ENCODE measurements at regions of chr4 and their contacts with region 1.

Region 1: DNA sequence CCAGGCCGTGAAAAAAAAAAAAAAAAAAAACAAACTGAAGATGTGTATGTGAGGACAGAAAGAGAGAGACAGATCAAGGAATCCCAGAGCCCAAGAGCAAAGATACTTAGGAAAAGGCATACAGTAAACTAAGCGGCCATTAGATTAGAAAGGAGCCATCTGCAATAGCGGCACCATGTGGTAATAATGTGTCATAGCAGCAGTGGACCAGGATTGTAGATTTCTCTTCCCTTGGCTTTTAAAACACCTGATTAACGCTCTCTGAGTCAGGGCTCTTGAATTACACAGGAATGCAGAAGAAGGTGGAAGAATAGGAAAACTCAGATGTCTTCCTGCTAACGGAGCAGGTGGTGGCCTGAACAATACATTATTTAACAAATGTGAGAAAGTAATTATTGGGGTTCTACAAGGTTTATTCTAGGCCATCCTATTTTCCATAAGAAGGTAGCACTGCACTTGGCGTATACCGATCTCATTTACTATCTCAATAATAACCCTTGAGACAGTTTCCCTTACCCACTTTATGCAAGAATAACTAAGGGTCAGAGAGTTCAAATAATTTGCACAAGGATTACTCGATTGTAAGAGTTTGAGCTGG is 182.7 kb downstream of the KCNIP4 start:
- DNase-seq: peak; percentile 21 to 51 (median 32)
- ATAC-seq: peak; percentile 55; the same call in 1 of the 3 replicates
- H3K4me3 ChIP-seq: no peak overlapping the region
- H3K27ac ChIP-seq: no peak overlapping the region
- H3K4me1 ChIP-seq: no peaks in the 10 kb centered on the region
- H3K27me3 ChIP-seq: no peaks in the 10 kb centered on the region
- CTCF ChIP-seq: peak in 2 of 3 experiments; percentile 65 to 73; a peak in 4 of 6 replicates
- EP300 ChIP-seq: no peak
- POLR2A ChIP-seq: no peak
- RAD21 ChIP-seq: peak; percentile 30 to 62; a peak in 3 of 4 replicates

Region 2: DNA sequence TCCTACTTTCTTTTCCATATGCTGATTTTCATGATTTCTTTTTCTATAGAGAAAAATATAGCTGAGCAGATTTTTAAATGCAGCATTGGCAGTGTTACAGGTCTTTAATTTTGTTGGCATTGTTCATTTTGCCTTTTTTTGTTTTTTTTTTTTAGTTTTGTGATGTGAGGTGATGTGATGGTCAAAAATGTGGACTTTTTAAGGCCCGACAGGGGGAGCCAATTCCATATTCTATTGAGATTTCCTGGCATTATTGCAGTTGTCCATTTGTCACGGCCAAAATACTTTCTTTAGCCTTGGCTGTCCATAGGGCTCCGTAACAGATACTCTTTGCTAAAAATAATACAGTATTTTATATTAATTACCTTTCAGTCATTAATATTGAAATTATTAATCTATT is 1466.4 kb before region 1 on chr4:
- CTCF ChIA-PET with region 1: no interaction called
- POLR2A ChIA-PET with region 1: no interaction called
- in situ Hi-C with region 1: no loop called
- intact Hi-C with region 1: loop called (anchors 10 kb)
- DNase-seq: peak in 2 of 4 experiments; percentile 8 to 13
- ATAC-seq: no peak
- H3K4me3 ChIP-seq: no peak overlapping the region
- H3K27ac ChIP-seq: no peak overlapping the region
- H3K4me1 ChIP-seq: no peaks in the 10 kb centered on the region
- H3K27me3 ChIP-seq: no peaks in the 10 kb centered on the region
- CTCF ChIP-seq: peak in 1 of 3 experiments; percentile 24; a peak in 1 of 6 replicates
- EP300 ChIP-seq: no peak
- POLR2A ChIP-seq: no peak
- RAD21 ChIP-seq: no peak

Region 3: DNA sequence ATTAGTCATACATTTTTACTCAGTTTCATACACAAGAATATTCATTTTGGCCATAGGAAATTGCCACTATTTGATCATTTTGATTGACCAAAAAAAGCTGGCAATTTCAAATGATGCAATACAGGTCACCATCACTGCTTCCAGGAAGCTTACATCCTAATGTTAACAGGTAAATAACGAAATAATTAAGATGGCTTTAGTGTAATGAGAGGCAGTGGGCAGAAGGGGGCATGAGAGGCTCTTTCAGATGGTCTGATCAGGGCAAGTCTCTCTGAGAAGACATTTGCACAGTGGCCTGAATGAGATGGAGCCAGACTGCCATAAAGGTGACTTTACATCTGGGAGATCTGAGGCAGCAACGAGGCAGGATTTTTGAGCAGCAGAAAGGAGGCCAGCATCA is 1343.5 kb before region 1 on chr4:
- CTCF ChIA-PET with region 1: no interaction called
- POLR2A ChIA-PET with region 1: no interaction called
- in situ Hi-C with region 1: loop called (anchors 25 kb)
- intact Hi-C with region 1: no loop called
- DNase-seq: peak; percentile 18 to 63 (median 37)
- ATAC-seq: peak; percentile 90
- H3K4me3 ChIP-seq: no peak overlapping the region
- H3K27ac ChIP-seq: no peak overlapping the region
- H3K4me1 ChIP-seq: no peaks in the 10 kb centered on the region
- H3K27me3 ChIP-seq: no peaks in the 10 kb centered on the region
- CTCF ChIP-seq: peak; percentile 48 to 52 (median 48)
- EP300 ChIP-seq: no peak
- POLR2A ChIP-seq: no peak
- RAD21 ChIP-seq: peak; percentile 31 to 52

Region 4: DNA sequence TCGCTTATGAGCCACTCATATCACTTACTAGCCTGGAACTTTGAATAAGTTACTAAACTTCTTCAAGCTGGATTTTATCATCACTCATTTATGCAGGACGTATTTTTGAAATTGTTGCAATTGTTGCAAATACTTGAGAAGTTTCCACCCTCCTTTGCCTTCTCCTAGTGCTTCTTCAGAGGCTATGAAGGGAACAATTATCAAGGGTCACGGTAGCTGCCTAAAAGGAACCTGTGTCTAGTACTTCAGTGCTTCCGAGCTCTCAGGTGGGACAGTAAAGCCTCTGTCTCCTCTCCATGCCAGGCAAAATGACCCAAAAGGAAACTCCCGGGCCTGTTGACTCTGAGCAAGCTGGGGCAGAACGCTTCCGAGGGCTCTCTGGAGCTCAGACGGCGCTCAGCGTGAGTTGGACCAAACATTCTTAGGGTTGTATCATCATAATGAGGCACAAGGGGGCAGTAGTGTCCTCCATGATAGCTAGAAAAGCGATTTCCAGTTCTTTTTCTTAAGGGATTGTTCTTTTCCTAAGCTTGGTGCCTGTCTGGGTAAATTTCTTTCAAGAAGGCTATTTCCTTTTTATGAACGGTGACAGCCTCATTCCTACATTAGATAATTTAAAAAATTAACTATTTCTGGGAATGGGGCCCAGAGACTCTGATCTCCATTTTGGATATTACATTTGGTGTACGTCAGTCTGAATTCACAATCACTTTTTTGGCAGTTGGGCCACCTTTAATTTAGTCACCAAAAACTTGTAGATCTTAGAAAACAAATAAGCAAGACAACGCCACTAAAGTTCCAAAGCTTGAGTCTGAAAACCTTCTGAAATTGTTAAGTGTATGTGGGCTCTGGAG is 992.5 kb before region 1 on chr4:
- CTCF ChIA-PET with region 1: interaction called, 3 read pairs
- POLR2A ChIA-PET with region 1: no interaction called
- in situ Hi-C with region 1: loop called (anchors 5 kb)
- intact Hi-C with region 1: loop called (anchors 1 kb)
- DNase-seq: peak; percentile 49 to 60 (median 50)
- ATAC-seq: peak; percentile 96
- H3K4me3 ChIP-seq: no peak overlapping the region
- H3K27ac ChIP-seq: no peak overlapping the region
- H3K4me1 ChIP-seq: no peaks in the 10 kb centered on the region
- H3K27me3 ChIP-seq: no peaks in the 10 kb centered on the region
- CTCF ChIP-seq: peak; percentile 56 to 71 (median 70)
- EP300 ChIP-seq: no peak
- POLR2A ChIP-seq: no peak
- RAD21 ChIP-seq: peak; percentile 30 to 57

Region 5: DNA sequence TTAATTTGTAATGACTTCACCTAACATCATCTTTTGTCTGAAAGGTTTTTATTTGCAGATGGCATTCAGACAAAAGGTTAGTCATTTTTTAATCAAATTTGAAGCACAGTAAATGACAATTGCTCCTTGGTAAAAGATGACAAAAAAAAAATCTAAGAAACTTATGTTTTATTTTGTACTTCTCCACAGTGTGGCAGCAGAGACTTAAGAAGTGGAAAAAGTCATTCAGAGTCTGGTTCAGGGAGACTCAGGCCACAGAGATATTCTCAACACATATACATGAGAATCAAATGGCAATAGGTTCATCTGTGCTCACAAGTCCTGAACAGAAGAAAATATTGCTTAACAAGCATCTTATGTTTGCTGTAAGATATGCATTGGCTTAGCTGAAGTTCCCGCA is 253.6 kb before region 1 on chr4:
- CTCF ChIA-PET with region 1: no interaction called
- POLR2A ChIA-PET with region 1: no interaction called
- in situ Hi-C with region 1: no loop called
- intact Hi-C with region 1: loop called (anchors 2 kb)
- DNase-seq: peak in 1 of 4 experiments; percentile 1
- ATAC-seq: no peak
- H3K4me3 ChIP-seq: no peak overlapping the region
- H3K27ac ChIP-seq: no peak overlapping the region
- H3K4me1 ChIP-seq: no peaks in the 10 kb centered on the region
- H3K27me3 ChIP-seq: no peaks in the 10 kb centered on the region
- CTCF ChIP-seq: peak in 1 of 3 experiments; percentile 13; a peak in 1 of 6 replicates
- EP300 ChIP-seq: no peak
- POLR2A ChIP-seq: no peak
- RAD21 ChIP-seq: peak in 1 of 2 experiments; percentile 22; a peak in 2 of 4 replicates

Region 6: GRCh38 chr4:21529214-21529613 is 236.7 kb before region 1 on chr4:
- CTCF ChIA-PET with region 1: no interaction called
- POLR2A ChIA-PET with region 1: no interaction called
- in situ Hi-C with region 1: no loop called
- intact Hi-C with region 1: no loop called
- DNase-seq: no peak
- ATAC-seq: no peak
- H3K4me3 ChIP-seq: no peak overlapping the region
- H3K27ac ChIP-seq: no peak overlapping the region
- H3K4me1 ChIP-seq: no peaks in the 10 kb centered on the region
- H3K27me3 ChIP-seq: no peaks in the 10 kb centered on the region
- CTCF ChIP-seq: no peak
- EP300 ChIP-seq: no peak
- POLR2A ChIP-seq: no peak
- RAD21 ChIP-seq: no peak

Region 7: GRCh38 chr4:21921526-21922180 is 155.7 kb after region 1 on chr4:
- CTCF ChIA-PET with region 1: no interaction called
- POLR2A ChIA-PET with region 1: no interaction called
- in situ Hi-C with region 1: no loop called
- intact Hi-C with region 1: no loop called
- DNase-seq: no peak
- ATAC-seq: no peak
- H3K4me3 ChIP-seq: no peak overlapping the region
- H3K27ac ChIP-seq: no peak overlapping the region
- H3K4me1 ChIP-seq: no peaks in the 10 kb centered on the region
- H3K27me3 ChIP-seq: no peaks in the 10 kb centered on the region
- CTCF ChIP-seq: no peak
- EP300 ChIP-seq: no peak
- POLR2A ChIP-seq: no peak
- RAD21 ChIP-seq: no peak